HCT116 (cell line): ENCODE measurements at regions of chr10 and their contacts with region 1.

Region 1: DNA sequence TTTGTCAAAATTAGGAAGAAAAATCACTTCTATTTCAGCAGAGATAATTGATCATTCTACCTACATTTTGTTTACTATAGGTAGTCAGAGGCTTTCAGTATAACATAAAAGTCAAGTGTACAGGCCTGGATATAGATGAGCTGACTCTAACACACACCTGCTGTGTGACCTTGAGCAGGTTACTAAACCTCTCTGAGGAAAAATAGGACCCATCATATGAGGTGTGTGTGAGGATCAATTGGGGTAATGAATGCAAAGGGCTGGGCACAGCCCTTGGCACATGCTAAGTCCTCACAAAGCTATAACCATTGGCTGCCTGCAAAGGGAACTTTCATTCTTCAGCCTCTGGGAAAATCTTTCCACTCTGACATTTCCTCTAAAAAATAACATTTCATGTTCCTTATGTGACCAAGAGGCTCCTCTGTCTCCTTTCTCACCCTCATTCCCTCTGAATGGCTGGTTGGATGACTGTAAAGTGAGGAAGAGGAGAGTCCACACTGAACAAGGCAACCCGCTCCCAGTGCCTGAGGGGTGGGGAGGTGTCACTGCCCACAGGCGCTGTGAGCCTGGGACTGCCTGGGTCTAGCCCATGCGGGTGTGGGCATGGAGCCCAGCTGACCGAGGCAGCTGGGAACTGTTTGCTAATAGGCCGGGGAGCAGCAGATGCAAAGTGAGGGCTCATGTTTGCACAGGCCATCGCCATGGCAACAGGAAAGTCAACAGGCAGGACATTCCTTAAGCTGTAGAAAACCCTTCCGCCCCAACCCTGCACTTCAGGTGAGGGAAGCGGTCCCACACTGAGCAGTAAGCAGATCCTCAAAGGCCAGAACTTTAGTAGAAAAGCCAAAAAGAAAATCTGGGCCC is 36.8 kb downstream of the MYOF start:
- DNase-seq: peak; percentile 84
- ATAC-seq: peak; percentile 81
- H3K4me3 ChIP-seq: no peak overlapping the region
- H3K27ac ChIP-seq: peak overlapping the region; percentile 100
- H3K4me1 ChIP-seq: peaks cover 78 to 93% of the 10 kb centered on the region in 2 experiments
- H3K27me3 ChIP-seq: no peaks in the 10 kb centered on the region
- CTCF ChIP-seq: no peak
- POLR2A ChIP-seq: no peak
- RAD21 ChIP-seq: no peak

Region 2: DNA sequence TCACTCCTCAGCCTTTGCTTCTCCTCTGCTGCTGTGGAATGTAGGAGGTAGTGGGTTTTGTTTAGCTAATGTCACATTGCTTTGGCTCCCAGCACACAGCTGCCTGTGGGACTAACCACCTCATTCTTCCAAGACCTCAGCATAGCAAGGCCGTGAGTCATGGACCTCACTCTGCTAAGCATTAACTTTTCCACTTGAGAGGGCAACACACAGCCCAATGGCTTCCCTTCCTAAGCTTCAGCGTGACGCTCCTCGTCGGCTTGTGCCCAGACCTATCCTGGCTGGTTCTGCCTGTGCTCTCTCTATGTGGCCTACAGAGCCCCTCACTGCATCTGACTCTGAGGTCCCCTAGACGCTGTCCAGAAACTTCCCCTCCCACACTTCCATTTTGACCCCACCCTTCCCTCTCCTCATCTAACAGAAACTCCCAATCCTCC is 13.5 kb after region 1 on chr10:
- CTCF ChIA-PET with region 1: interaction called, 5 read pairs
- POLR2A ChIA-PET with region 1: interaction called, 13 read pairs
- RAD21 ChIA-PET with region 1: interaction called in 1 of 2 experiments, 3 read pairs
- intact Hi-C with region 1: no loop called
- DNase-seq: peak; percentile 97
- ATAC-seq: peak; percentile 81
- H3K4me3 ChIP-seq: peak overlapping the region; percentile 18 to 32
- H3K27ac ChIP-seq: peak overlapping the region; percentile 97
- H3K4me1 ChIP-seq: peaks cover 83 to 90% of the 10 kb centered on the region in 2 experiments
- H3K27me3 ChIP-seq: no peaks in the 10 kb centered on the region
- CTCF ChIP-seq: no peak
- POLR2A ChIP-seq: no peak
- RAD21 ChIP-seq: no peak

Region 3: DNA sequence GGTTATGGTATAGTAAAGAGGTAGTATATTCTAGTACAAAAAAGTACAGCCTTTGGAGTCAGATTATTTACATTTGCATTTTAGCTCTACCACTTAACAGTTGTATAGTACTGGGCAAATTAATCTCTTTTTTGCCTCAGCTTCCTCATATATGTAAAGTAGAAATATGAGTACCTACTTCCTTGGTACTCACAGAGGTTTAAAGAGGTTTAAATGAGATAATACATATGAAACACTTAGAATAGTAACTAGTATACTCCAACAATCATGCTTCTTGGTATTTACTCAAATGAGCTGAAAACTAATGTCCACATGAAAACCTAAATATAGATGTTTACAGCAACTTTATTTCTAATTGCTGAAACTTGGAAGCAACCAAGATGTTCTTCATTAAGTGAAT is 242.4 kb after region 1 on chr10:
- CTCF ChIA-PET with region 1: no interaction called
- POLR2A ChIA-PET with region 1: no interaction called
- RAD21 ChIA-PET with region 1: no interaction called
- intact Hi-C with region 1: no loop called
- DNase-seq: no peak
- ATAC-seq: no peak
- H3K4me3 ChIP-seq: no peak overlapping the region
- H3K27ac ChIP-seq: no peak overlapping the region
- H3K4me1 ChIP-seq: no peaks in the 10 kb centered on the region
- H3K27me3 ChIP-seq: no peaks in the 10 kb centered on the region
- CTCF ChIP-seq: no peak
- POLR2A ChIP-seq: no peak
- RAD21 ChIP-seq: no peak